Psoas muscle (tissue), 8 donors: ENCODE measurements at regions of chr2 and their contacts with region 1.

Region 1: DNA sequence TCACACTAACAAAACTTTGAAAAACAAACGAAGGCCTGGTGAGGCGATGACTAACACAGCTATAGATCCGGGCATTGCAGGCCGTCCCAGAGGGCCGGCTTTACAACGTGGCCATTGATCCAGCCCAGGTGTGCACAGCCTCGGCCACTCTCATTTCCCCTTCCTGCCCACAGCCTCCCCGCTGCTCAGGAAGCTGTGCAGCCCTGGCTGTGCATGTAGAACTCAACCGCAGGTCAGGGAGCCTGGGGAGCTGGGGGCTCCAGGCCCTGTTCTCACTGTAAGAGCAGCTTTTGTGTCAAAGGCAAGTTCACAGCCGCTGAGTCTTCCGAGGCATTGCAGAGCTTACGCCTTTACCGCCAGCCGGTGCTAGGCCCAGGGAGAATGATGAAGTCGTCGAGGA is 87.2 kb downstream of the LONRF2 start:
- DNase-seq: no peak
- ATAC-seq: no peak
- H3K4me3 ChIP-seq: no peak overlapping the region
- H3K27ac ChIP-seq: no peak overlapping the region
- H3K4me1 ChIP-seq: peaks cover 3% of the 10 kb centered on the region
- H3K27me3 ChIP-seq: no peaks in the 10 kb centered on the region
- CTCF ChIP-seq: no peak

Region 2: GRCh38 chr2:100104718-100105677 is 130.1 kb before region 1 on chr2:
- intact Hi-C with region 1: no loop called
- DNase-seq: peak in 1 of 2 donors; percentile 31
- ATAC-seq: peak in 2 of 4 donors; percentile 49 to 51
- H3K4me3 ChIP-seq: peak overlapping the region; percentile 62
- H3K27ac ChIP-seq: no peak overlapping the region
- H3K4me1 ChIP-seq: no peaks in the 10 kb centered on the region
- H3K27me3 ChIP-seq: peaks cover 0 to 26% (median 2%) of the 10 kb centered on the region in 3 donors
- CTCF ChIP-seq: no peak

Region 3: GRCh38 chr2:100182494-100183361 is 52.4 kb before region 1 on chr2:
- intact Hi-C with region 1: loop called in 1 of 2 experiments (anchors 5 kb)
- DNase-seq: no peak
- ATAC-seq: no peak
- H3K4me3 ChIP-seq: no peak overlapping the region
- H3K27ac ChIP-seq: no peak overlapping the region
- H3K4me1 ChIP-seq: no peaks in the 10 kb centered on the region
- H3K27me3 ChIP-seq: no peaks in the 10 kb centered on the region
- CTCF ChIP-seq: no peak